ENCODE measurements at regions of chr10 and their contacts with region 1.

Region 1: GRCh38 chr10:110137142-110137545 is 70.3 kb upstream of the MXI1 start:
- DNase-seq: peak in 3 of 14 experiments; percentile 74 to 79 (median 77)
- ATAC-seq: peak; percentile 74
- H3K4me3 ChIP-seq: no peak overlapping the region
- H3K4me3 Mint-ChIP-seq: no peak overlapping the region
- H3K27ac ChIP-seq: no peak overlapping the region
- H3K27ac Mint-ChIP-seq: peak overlapping the region; percentile 35
- H3K4me1 ChIP-seq: peaks cover 5% of the 10 kb centered on the region
- H3K4me1 Mint-ChIP-seq: peaks cover 31% of the 10 kb centered on the region
- H3K27me3 ChIP-seq: no peaks in the 10 kb centered on the region
- H3K27me3 Mint-ChIP-seq: no peaks in the 10 kb centered on the region
- CTCF ChIP-seq: peak; percentile 93

Region 2: GRCh38 chr10:110158051-110159005 is 21.2 kb after region 1 on chr10:
- CTCF ChIA-PET with region 1: interaction called, 4 read pairs
- POLR2A ChIA-PET with region 1: interaction called, 5 read pairs
- intact Hi-C with region 1: loop called in 1 of 2 experiments (anchors 2 kb)
- DNase-seq: no peak
- ATAC-seq: no peak
- H3K4me3 ChIP-seq: no peak overlapping the region
- H3K4me3 Mint-ChIP-seq: no peak overlapping the region
- H3K27ac ChIP-seq: no peak overlapping the region
- H3K27ac Mint-ChIP-seq: no peak overlapping the region
- H3K4me1 ChIP-seq: peaks cover 19% of the 10 kb centered on the region
- H3K4me1 Mint-ChIP-seq: peaks cover 16% of the 10 kb centered on the region
- H3K27me3 ChIP-seq: peaks cover 51% of the 10 kb centered on the region in 2 experiments
- H3K27me3 Mint-ChIP-seq: peaks cover 89% of the 10 kb centered on the region
- CTCF ChIP-seq: no peak

Region 3: GRCh38 chr10:110279407-110279986 is 142.4 kb after region 1 on chr10:
- CTCF ChIA-PET with region 1: interaction called, 36 read pairs
- POLR2A ChIA-PET with region 1: interaction called, 5 read pairs
- intact Hi-C with region 1: loop called (anchors 1 kb)
- DNase-seq: peak in 13 of 14 experiments; percentile 9 to 80 (median 28)
- ATAC-seq: peak; percentile 78
- H3K4me3 ChIP-seq: no peak overlapping the region
- H3K4me3 Mint-ChIP-seq: no peak overlapping the region
- H3K27ac ChIP-seq: no peak overlapping the region
- H3K27ac Mint-ChIP-seq: no peak overlapping the region
- H3K4me1 ChIP-seq: peaks cover 5% of the 10 kb centered on the region
- H3K4me1 Mint-ChIP-seq: peaks cover 44% of the 10 kb centered on the region
- H3K27me3 ChIP-seq: no peaks in the 10 kb centered on the region
- H3K27me3 Mint-ChIP-seq: no peaks in the 10 kb centered on the region
- CTCF ChIP-seq: peak; percentile 70

Region 4: GRCh38 chr10:110547139-110547761 is 410.1 kb after region 1 on chr10:
- CTCF ChIA-PET with region 1: no interaction called
- POLR2A ChIA-PET with region 1: no interaction called
- intact Hi-C with region 1: loop called (anchors 2 to 5 kb)
- DNase-seq: peak in 3 of 14 experiments; percentile 77 to 79 (median 78)
- ATAC-seq: peak; percentile 80
- H3K4me3 ChIP-seq: no peak overlapping the region
- H3K4me3 Mint-ChIP-seq: no peak overlapping the region
- H3K27ac ChIP-seq: no peak overlapping the region
- H3K27ac Mint-ChIP-seq: no peak overlapping the region
- H3K4me1 ChIP-seq: no peaks in the 10 kb centered on the region
- H3K4me1 Mint-ChIP-seq: peaks cover 6% of the 10 kb centered on the region
- H3K27me3 ChIP-seq: peaks cover 0 to 10% of the 10 kb centered on the region in 2 experiments
- H3K27me3 Mint-ChIP-seq: peaks cover 21% of the 10 kb centered on the region
- CTCF ChIP-seq: peak; percentile 92

Region 5: DNA sequence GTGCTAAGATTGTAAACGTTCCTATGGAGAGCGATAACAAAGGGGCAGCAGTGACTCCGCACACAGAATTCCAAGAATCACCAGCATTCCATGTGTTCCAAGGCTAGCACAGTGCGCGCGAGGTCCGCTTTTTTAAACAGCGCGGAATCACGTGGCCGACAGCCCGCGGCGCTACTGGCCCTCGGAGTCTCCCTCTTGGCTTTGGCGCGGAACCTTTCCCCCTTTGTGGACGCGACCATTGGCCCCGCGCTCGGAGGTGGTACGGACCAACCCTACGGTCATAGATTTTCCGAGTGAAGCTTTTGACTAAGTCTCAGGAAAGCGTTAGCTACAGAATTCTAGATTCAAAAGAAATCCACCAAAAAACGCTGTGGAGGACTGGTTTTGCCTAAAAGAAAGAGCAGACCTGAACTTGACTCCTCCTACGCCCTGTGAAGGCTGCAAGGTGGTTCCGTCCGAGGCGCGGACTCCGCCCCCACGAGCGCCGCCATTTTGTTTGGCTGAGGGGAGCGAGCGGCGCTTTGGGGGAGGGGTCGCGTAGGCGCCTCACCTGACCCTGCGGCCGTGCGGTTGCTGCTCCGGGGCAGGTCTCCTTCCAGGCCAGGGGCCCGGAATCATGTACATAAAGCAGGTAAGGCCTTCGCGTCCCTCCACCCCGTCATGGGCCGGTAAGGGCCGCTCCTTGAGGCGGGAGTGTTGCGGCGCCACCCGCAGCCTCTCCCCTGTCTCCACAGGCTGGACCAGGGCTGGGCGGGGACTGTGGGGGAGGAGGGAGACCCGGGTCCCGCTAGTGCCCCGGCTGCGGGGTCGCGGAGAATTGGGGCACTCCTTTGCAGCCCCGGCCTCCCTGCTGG is 430.3 kb after region 1 on chr10 and contains the start of gene SMC3:
- CTCF ChIA-PET with region 1: no interaction called
- POLR2A ChIA-PET with region 1: no interaction called
- intact Hi-C with region 1: loop called in 1 of 2 experiments (anchors 5 kb)
- DNase-seq: peak; percentile 82 to 96 (median 88)
- ATAC-seq: peak; percentile 86
- H3K4me3 ChIP-seq: peak within 1 kb of the TSS; percentile 96
- H3K4me3 Mint-ChIP-seq: peak within 1 kb of the TSS; percentile 98
- H3K27ac ChIP-seq: peak within 1 kb of the TSS; percentile 79 to 83
- H3K27ac Mint-ChIP-seq: peak within 1 kb of the TSS; percentile 97
- H3K4me1 ChIP-seq: peaks cover 24% of the 10 kb centered on the region
- H3K4me1 Mint-ChIP-seq: peaks cover 49% of the 10 kb centered on the region
- H3K27me3 ChIP-seq: no peaks in the 10 kb centered on the region
- H3K27me3 Mint-ChIP-seq: peaks cover 21% of the 10 kb centered on the region
- CTCF ChIP-seq: no peak
- total RNA-seq, gene SMC3: 46.8 to 48.0 TPM